Dorsolateral prefrontal cortex (tissue), 120 donors: ENCODE measurements at regions of chr16 and their contacts with region 1.

Region 1: DNA sequence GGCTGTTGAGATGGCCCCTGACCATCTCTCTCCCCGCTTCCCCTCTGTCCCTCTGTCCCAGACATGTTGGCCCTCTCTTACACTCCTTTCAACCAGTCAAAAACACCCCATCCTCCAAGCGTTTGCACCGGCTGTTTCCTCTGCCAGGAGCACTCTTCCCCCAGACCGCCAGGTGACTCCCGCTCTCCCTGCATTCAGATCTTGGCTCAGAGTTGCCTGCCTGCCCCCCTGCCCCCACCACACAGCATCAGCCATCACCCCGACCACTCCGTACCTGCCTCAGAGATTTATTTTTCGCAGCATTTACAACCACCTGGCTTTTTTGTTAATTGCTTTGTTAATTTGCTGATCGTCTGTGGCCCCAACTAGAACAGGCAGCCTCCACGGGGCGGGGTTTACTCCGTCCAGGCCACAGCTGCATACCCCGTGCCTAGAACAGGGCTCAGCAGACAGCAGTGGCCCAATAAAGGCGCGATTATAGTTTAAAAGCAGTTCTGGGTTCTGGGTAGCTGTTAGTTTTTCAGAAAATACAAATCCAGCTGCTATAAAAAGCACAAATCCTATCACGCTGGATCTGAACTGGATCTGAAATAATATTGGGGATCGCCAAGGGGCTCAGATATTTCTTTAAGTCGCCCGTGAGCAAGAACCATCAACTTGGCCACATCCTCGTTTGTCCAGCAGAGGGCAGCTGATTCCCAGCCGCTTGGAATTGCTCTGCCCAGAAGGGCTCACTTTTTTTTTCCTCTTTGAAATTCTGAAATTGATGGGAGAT is 173.6 kb downstream of the IRF8 start:
- DNase-seq: peak in 9 of 10 donors; percentile 33 to 75 (median 69)
- H3K4me3 ChIP-seq: no peak overlapping the region
- H3K27ac ChIP-seq: no peak overlapping the region
- H3K27me3 ChIP-seq: peaks cover 0 to 24% (median 5%) of the 10 kb centered on the region in 45 donors
- CTCF ChIP-seq: peak; percentile 65 to 92 (median 84)

Region 2: GRCh38 chr16:86343027-86343787 is 270.7 kb after region 1 on chr16:
- intact Hi-C with region 1: loop called in 1 of 2 experiments (anchors 5 kb)
- DNase-seq: peak in 1 of 10 donors; percentile 5
- H3K4me3 ChIP-seq: peak overlapping the region in 7 of 59 donors; percentile 11 to 27 (median 22)
- H3K27ac ChIP-seq: peak overlapping the region in 38 of 59 donors; percentile 10 to 85 (median 62)
- H3K27me3 ChIP-seq: peaks cover 0 to 78% (median 38%) of the 10 kb centered on the region in 45 donors
- CTCF ChIP-seq: no peak